Activated naive CD4-positive, alpha-beta T cell treated with anti-CD3 and anti-CD28 coated beads for 36 hours (primary cell): ENCODE measurements at regions of chr17 and their contacts with region 1.

Region 1: DNA sequence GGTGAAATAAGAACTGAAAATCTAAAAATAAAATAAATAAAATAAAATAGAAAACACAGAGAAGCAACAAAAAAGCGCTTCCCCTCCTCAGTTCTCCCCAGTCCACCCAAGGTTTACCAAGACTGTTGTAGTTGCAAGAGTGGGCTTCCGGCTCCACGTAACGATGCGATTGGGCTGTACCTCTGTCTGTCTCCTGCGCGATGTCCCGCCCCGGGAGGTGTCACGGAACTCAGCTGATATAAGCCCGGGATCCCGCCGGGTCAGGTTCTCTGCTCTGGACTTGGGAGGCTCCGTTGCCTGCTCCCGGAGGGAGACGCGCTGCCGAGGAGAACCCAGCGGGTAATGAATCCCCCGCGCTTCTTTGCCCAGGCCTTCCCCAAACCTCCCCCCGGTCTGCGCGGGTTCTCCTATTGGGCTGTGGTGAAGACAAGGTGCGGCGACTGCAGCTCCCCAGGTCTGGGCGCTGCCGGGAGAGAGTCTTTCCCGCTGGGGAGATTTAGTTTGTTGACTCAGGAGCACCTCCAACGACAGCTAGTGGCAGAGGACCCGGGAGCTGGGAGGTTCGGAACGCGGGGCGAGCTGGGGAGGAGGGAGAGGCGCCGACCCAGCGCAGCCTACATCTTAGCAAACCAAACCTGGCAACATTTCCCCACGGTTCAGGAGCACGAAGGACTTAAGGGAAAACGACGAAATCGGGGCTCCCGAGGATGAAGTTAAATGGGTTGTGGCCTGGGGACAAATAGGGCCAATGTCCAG is at the start of gene SLFN5:
- DNase-seq: peak; percentile 95
- H3K4me3 Mint-ChIP-seq: peak within 1 kb of the TSS; percentile 87
- H3K27ac Mint-ChIP-seq: peak within 1 kb of the TSS; percentile 97
- H3K4me1 Mint-ChIP-seq: peaks cover 65% of the 10 kb centered on the region
- H3K27me3 Mint-ChIP-seq: no peaks in the 10 kb centered on the region
- total RNA-seq, gene SLFN5: 34.1 to 35.0 TPM

Region 2: GRCh38 chr17:35022536-35023063 is 220.4 kb before region 1 on chr17:
- CTCF ChIA-PET with region 1: no interaction called
- intact Hi-C with region 1: loop called (anchors 5 kb)
- DNase-seq: peak; percentile 91
- H3K4me3 Mint-ChIP-seq: peak overlapping the region; percentile 81
- H3K27ac Mint-ChIP-seq: peak overlapping the region; percentile 98
- H3K4me1 Mint-ChIP-seq: peaks cover 35% of the 10 kb centered on the region
- H3K27me3 Mint-ChIP-seq: no peaks in the 10 kb centered on the region

Region 3: DNA sequence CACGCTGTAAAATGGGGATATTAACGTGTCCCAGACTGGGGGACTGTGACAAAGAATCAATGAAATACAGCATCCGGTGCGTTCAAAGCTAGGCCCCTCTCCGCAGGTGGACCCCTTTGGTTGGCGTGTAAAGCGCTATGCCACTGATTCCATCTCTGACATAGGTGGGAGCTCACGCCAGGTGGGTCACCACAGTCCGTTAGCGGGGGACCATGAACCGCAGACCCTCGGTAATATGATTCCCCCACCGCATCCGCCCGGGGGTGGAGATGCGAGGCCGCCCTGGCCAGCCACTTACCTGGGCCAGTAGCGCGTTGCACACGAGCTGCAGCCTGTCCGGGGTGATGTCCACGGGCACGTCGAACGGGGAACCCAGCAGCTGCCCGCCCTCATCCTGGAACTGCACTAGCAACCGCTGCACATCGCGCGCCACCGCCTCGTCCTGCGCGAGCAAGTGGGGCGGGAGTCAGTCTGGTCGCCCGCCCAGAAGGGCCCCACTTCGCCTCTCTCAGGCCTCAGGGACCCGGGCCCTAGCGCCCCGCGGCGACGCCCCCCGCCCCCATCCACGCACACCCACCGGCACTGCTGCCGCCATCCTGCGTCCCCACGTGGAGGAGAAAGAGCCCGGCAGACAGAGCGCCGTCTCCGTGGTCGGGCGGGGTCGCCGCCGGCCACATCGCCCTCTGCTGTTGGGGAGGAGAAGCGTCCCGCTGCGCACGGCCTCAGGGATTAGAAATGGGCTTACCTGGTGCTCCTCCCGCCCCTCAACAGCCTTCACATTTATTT is 101.1 kb before region 1 on chr17 and contains the start of gene NLE1:
- CTCF ChIA-PET with region 1: interaction called, 6 read pairs
- intact Hi-C with region 1: loop called (anchors 1 kb)
- DNase-seq: peak; percentile 89
- H3K4me3 Mint-ChIP-seq: peak within 1 kb of the TSS; percentile 77
- H3K27ac Mint-ChIP-seq: peak within 1 kb of the TSS; percentile 82
- H3K4me1 Mint-ChIP-seq: peaks cover 25% of the 10 kb centered on the region
- H3K27me3 Mint-ChIP-seq: no peaks in the 10 kb centered on the region
- total RNA-seq, gene NLE1: 33.0 to 35.2 TPM

Region 4: GRCh38 chr17:35154196-35155165 is 88.5 kb before region 1 on chr17:
- CTCF ChIA-PET with region 1: no interaction called
- intact Hi-C with region 1: no loop called
- DNase-seq: no peak
- H3K4me3 Mint-ChIP-seq: no peak overlapping the region
- H3K27ac Mint-ChIP-seq: no peak overlapping the region
- H3K4me1 Mint-ChIP-seq: peaks cover 4% of the 10 kb centered on the region
- H3K27me3 Mint-ChIP-seq: no peaks in the 10 kb centered on the region

Region 5: GRCh38 chr17:35254107-35254802 is 11.3 kb after region 1 on chr17:
- CTCF ChIA-PET with region 1: interaction called, 3 read pairs
- intact Hi-C with region 1: loop called (anchors 1 kb)
- DNase-seq: no peak
- H3K4me3 Mint-ChIP-seq: no peak overlapping the region
- H3K27ac Mint-ChIP-seq: peak overlapping the region; percentile 48
- H3K4me1 Mint-ChIP-seq: peaks cover 81% of the 10 kb centered on the region
- H3K27me3 Mint-ChIP-seq: no peaks in the 10 kb centered on the region

Region 6: DNA sequence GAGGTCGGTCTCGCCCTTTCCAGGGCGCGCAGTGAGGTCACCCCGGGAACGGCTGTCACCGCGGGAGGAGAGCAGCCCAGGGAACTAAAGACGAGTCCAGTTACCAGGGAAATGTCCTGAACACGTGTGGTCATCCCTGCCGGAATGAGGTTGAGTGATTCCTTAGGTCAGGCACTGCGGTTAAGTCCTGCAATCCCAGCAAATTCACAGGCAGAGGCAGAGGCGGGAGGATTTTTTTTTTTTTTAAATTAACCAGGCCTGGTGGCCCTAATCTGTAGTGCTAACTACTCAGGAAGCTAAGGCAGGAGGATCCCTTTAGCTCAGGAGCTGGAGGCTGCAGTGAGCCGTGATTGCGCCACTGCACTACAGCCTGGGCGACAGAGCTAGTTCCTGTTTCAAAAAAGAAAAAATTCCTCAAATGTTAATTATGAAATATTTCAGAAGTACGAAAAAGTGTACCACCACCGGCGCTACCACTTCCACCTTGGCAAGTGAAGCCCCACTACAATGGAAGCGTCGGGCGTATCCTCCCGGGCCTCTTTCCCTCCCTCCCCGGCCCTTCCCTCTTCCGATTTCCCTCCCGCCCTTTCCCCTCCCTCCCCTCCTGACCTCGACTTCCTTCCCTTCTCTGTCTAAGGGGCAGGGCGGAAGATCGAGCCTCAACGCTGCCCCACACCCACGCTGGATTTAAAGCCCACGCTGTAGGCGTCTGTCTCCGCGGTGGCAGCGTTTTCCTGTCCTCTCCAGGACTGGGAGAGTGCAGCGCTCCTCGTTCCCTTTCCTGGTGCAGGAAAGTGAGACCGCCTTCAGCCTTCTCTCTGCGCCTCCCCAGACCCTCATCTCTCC is 103.2 kb after region 1 on chr17:
- CTCF ChIA-PET with region 1: no interaction called
- intact Hi-C with region 1: no loop called
- DNase-seq: peak; percentile 42
- H3K4me3 Mint-ChIP-seq: peak overlapping the region; percentile 76
- H3K27ac Mint-ChIP-seq: peak overlapping the region; percentile 19
- H3K4me1 Mint-ChIP-seq: peaks cover 23% of the 10 kb centered on the region
- H3K27me3 Mint-ChIP-seq: no peaks in the 10 kb centered on the region

Region 7: GRCh38 chr17:35448214-35448898 is 205.4 kb after region 1 on chr17 and contains the start of gene SLFN13:
- CTCF ChIA-PET with region 1: no interaction called
- intact Hi-C with region 1: loop called (anchors 1 kb)
- DNase-seq: peak; percentile 98
- H3K4me3 Mint-ChIP-seq: peak within 1 kb of the TSS; percentile 52
- H3K27ac Mint-ChIP-seq: peak within 1 kb of the TSS; percentile 13
- H3K4me1 Mint-ChIP-seq: peaks cover 12% of the 10 kb centered on the region
- H3K27me3 Mint-ChIP-seq: no peaks in the 10 kb centered on the region
- total RNA-seq, gene SLFN13: 28.6 to 30.1 TPM

Region 8: DNA sequence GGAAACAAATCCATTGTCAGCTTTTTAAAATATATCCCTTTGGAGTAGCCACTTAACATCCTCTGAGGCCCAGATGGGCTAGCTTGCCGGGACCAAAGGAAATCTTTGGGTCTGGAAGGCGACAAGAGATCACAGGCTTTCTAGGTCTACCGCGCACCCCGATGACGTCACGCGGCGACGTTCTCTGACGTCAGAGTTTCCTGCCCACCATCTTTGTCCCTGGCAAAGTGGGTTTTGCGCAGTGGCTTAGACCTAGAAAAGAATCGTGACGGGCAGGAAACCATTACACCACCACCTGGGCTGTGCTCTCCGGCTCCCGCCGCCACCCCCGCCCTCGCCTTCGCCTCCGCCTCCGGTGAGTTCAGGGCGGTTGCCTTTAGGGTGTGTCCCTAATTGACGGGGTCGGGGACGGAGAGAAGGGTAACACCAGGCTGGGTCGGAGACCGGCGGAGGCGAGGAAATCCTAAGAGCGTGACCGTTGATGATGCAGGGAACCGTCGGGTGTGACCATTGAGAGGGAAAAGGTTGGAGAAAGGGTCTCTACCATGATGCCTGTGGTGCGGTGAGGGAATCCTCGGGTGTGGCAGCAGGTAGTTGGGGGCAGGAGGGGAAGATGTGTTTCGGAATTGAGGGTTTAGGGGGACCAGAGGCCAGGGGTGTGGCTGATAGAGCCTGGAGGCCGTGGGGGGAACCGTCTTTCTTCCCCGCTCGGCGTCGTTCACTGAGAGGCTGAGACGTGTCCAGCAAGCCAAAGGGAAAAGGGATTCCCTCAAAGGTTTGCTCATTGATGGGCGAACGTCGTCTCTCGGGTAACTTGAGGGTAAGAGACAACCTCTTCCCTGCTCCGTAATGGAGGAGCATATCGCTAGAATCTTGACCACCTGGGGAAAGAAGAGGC is 344.3 kb after region 1 on chr17 and contains the start of gene AP2B1:
- CTCF ChIA-PET with region 1: no interaction called
- intact Hi-C with region 1: loop called (anchors 1 kb)
- DNase-seq: peak; percentile 97
- H3K4me3 Mint-ChIP-seq: peak within 1 kb of the TSS; percentile 97
- H3K27ac Mint-ChIP-seq: peak within 1 kb of the TSS; percentile 97
- H3K4me1 Mint-ChIP-seq: peaks cover 29% of the 10 kb centered on the region
- H3K27me3 Mint-ChIP-seq: no peaks in the 10 kb centered on the region
- total RNA-seq, gene AP2B1: 158 to 172 TPM